ENCODE measurements at regions of chr11 and their contacts with region 1.

Region 1: GRCh38 chr11:62427630-62428233 is 8.9 kb downstream of the SCGB1A1 start:
- DNase-seq: peak in 1 of 2 experiments; percentile 69
- H3K4me3 ChIP-seq: no peak overlapping the region
- H3K27ac ChIP-seq: peak overlapping the region; percentile 91
- H3K4me1 ChIP-seq: peaks cover 45% of the 10 kb centered on the region
- H3K27me3 ChIP-seq: no peaks in the 10 kb centered on the region
- CTCF ChIP-seq: no peak

Region 2: DNA sequence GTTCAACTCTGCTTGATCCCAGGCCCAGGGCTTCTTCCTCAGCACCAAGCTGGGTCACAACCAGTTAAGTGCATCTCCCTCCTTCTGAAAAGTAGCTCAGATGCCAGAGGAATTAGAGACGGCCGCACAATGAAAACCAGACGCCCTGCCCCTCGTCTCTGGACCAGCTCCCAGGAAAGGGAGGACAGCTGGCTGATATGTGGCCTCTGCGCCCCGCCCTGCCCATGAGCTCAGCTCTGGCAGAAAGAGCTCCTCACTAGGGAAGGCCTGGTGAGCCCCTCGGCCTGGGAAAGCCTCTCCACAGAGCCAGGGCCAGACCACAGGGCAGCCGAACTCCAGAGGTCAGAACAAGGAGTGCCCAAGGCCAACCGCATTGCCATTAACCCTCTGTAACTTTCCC is 27.0 kb before region 1 on chr11:
- CTCF ChIA-PET with region 1: interaction called, 16 read pairs
- POLR2A ChIA-PET with region 1: interaction called, 3 read pairs
- intact Hi-C with region 1: loop called (anchors 2 kb)
- DNase-seq: peak in 1 of 2 experiments; percentile 61
- H3K4me3 ChIP-seq: no peak overlapping the region
- H3K27ac ChIP-seq: no peak overlapping the region
- H3K4me1 ChIP-seq: 0 out of 2 replicates have a peak, but pooled peaks cover 7% of the 10 kb centered on the region
- H3K27me3 ChIP-seq: no peaks in the 10 kb centered on the region
- CTCF ChIP-seq: no peak

Region 3: DNA sequence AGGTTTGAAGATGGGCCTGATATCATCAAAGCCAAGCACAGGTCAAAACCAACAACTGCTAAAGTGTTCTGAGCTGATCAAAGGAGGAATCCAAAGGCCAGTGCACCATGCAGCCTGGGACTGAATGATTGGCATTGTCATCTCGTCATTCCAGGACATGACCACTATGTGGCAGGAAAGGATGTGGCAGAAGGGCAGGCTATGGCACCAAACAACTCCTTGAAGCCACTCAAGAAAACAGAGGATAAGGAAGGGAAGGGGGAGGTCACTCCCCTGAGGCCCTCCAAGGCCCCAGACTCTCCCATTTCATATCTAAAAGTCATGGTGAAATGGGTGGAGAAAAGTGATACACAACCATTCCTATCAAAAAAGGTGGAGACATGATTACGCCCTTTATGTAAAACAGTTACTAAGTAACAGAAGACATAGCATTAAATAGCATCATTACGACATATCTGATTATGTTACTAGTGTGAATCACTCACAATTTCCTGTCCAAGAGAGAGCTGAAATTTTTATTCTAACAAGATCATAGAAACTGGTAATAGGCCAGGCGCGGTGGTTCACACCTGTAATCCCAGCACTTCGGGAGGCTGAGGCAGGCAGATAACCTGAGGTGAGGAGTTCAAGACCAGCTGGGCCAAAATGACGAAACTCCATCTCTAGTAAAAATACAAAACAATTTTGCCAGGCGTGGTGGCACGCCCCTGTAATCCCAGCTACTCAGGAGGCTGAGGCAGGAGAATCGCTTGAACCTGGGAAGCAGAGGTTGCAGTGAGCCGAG is 69.6 kb after region 1 on chr11:
- CTCF ChIA-PET with region 1: interaction called, 10 read pairs
- POLR2A ChIA-PET with region 1: interaction called, 3 read pairs
- intact Hi-C with region 1: loop called (anchors 1 kb)
- DNase-seq: peak; percentile 76 to 98
- H3K4me3 ChIP-seq: no peak overlapping the region
- H3K27ac ChIP-seq: peak overlapping the region; percentile 73
- H3K4me1 ChIP-seq: peaks cover 28% of the 10 kb centered on the region
- H3K27me3 ChIP-seq: no peaks in the 10 kb centered on the region
- CTCF ChIP-seq: peak; percentile 74

Region 4: DNA sequence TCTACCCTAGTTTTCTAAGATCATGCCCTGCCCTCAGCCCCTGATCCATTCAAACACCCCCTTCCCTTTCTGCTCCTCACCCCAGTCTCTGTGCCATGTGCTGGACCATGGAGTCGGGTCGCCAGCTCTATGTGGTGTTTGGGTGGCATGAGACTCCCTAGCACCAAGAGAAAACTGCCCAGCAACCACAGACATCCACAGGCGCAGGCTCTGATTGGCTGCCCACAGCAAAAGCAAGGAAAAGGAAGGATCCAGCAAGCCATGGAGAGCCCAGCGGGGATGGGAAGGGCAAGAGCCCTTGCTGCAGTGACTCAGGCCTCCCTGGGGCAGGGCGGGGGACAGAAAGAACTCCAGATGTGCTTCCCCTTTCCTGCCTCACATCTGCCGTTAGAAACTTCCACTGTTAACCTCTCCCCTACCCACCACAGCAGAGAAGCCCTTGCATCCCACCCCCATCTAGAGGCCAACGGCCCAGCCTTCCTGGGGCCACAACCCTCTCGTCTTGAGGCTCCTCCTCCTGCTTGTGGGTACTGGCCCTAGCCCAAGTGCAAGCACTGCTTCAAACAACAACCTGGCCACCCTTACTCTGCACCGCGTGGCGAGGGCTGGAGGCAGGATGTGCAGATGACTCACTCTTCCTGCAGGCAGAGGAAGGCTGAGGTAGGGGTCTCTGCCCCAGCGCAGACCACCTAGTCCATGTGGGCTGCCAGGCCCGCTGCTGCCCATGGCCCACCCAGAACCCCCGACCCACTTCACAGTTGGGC is 128.6 kb after region 1 on chr11:
- CTCF ChIA-PET with region 1: interaction called, 30 read pairs
- POLR2A ChIA-PET with region 1: interaction called, 3 read pairs
- intact Hi-C with region 1: loop called (anchors 1 kb)
- DNase-seq: peak; percentile 90 to 94
- H3K4me3 ChIP-seq: peak overlapping the region; percentile 38; the same call in 1 of the 2 replicates
- H3K27ac ChIP-seq: peak overlapping the region; percentile 92
- H3K4me1 ChIP-seq: peaks cover 96% of the 10 kb centered on the region
- H3K27me3 ChIP-seq: no peaks in the 10 kb centered on the region
- CTCF ChIP-seq: no peak

Region 5: GRCh38 chr11:62860835-62861563 is 433.3 kb after region 1 on chr11:
- CTCF ChIA-PET with region 1: interaction called, 21 read pairs
- POLR2A ChIA-PET with region 1: no interaction called
- intact Hi-C with region 1: no loop called
- DNase-seq: no peak
- H3K4me3 ChIP-seq: no peak overlapping the region
- H3K27ac ChIP-seq: no peak overlapping the region
- H3K4me1 ChIP-seq: peaks cover 9% of the 10 kb centered on the region
- H3K27me3 ChIP-seq: no peaks in the 10 kb centered on the region
- CTCF ChIP-seq: no peak

Measured in PC-9 (cell line).